Natural killer cell (primary cell): ENCODE measurements at regions of chr22 and their contacts with region 1.

Region 1: DNA sequence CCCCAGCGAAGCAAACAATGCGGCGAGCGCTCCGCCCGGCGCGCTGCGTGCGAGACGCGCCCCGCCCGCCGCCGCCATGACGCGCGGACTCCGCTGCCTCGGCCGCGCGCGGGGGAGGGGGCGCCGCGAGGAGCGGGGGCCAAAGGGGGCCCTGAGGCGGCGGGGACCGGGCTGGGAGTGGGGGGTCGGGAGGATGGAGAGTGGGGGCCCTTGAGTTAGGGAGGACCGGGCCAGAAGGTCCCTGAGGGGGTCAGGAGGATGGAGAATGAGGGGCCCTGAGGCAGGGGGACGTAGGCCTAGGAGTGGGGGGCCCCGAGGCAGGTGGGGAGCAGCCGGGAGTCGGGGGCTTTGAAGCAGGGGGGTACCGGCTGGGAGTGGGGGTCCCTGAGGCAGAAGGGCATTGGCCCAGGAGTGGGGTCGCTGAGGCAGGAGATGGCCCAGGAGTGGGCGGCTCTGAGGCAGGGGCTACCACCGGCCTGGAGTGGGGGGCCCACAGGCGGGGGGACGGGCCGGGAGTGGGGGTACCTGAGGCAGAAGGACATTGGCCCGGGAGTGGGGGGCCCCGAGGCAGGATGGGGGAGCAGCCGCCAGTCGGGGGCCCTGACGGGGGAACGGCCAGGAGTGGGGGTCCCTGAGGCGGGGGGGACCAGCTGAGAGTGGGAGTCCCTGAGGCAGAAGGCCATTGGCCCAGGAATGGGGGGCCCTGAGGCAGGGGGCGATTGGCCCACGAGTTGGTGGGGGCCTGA is at the start of gene BRD1:
- DNase-seq: peak; percentile 49 to 84
- ATAC-seq: peak; percentile 68 to 74 (median 73)
- H3K4me3 ChIP-seq: peak within 1 kb of the TSS; percentile 55
- H3K4me3 Mint-ChIP-seq: peak within 1 kb of the TSS; percentile 93
- H3K27ac ChIP-seq: peak within 1 kb of the TSS; percentile 91
- H3K27ac Mint-ChIP-seq: peak within 1 kb of the TSS; percentile 83 to 88
- H3K4me1 ChIP-seq: peaks cover 42% of the 10 kb centered on the region
- H3K4me1 Mint-ChIP-seq: peaks cover 31 to 34% of the 10 kb centered on the region in 2 donors
- H3K27me3 ChIP-seq: no peaks in the 10 kb centered on the region
- H3K27me3 Mint-ChIP-seq: peaks cover 0 to 3% of the 10 kb centered on the region in 2 donors
- CTCF ChIP-seq: no peak
- total RNA-seq, gene BRD1: 126 to 154 (median 132) TPM

Region 2: DNA sequence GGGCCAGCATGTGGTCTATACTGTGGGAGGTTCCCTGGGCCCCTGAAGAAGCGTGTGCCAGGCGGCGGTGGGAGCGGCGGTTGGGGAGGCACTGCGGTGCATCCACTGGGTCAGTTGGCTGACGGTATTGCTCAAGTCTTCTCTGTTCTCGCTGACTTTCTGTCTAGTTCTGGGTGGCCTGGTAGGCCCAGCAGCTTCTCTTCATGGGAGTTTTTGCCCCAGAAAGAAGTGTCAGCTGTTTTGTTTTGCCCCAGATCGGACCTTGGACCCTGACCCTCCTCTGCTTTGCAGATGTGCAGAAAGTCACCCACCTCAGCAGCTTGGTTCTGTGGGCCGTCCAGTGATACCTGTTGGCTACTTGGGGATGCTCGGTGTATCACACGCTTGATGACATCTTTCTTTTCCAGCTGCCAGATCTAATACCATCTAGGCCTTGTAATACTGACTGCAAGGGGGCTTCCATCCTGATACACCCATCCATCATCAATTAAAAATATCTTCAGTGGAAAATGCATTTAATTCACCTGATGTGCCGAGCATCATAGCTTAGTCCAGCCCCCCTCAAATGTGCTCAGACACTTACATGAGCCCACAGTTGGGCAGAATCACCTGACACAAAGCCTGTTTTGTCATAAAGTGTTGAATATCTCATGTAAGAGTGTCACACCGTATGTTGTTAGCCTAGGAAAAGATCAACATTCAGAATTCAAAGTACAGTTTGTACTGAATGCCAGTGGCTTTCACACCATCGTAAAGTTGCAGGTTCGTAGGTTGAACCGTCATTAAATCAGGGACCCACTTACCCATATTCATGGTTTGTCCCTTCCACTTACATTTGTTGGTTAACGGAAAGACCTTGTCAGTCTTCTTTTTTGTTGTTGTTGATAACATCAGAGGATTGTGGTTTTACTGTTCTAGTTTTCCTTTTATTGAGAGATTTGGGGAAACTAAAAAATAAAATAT is 39.6 kb after region 1 on chr22:
- intact Hi-C with region 1: loop called (anchors 2 kb)
- DNase-seq: peak in 1 of 2 donors; percentile 62
- ATAC-seq: peak; percentile 41 to 68 (median 45)
- H3K4me3 ChIP-seq: no peak overlapping the region
- H3K4me3 Mint-ChIP-seq: peak overlapping the region; percentile 69
- H3K27ac ChIP-seq: peak overlapping the region; percentile 67
- H3K27ac Mint-ChIP-seq: peak overlapping the region; percentile 84 to 86
- H3K4me1 ChIP-seq: peaks cover 48% of the 10 kb centered on the region
- H3K4me1 Mint-ChIP-seq: peaks cover 65 to 67% of the 10 kb centered on the region in 2 donors
- H3K27me3 ChIP-seq: no peaks in the 10 kb centered on the region
- H3K27me3 Mint-ChIP-seq: no peaks in the 10 kb centered on the region
- CTCF ChIP-seq: no peak